PC-9 (cell line): ENCODE measurements at regions of chr17 and their contacts with region 1.

Region 1: GRCh38 chr17:40854159-40854814 is 12.7 kb downstream of the KRT12 start:
- DNase-seq: peak in 1 of 2 experiments; percentile 90
- H3K4me3 ChIP-seq: no peak overlapping the region
- H3K27ac ChIP-seq: peak overlapping the region; percentile 94
- H3K4me1 ChIP-seq: peaks cover 72% of the 10 kb centered on the region
- H3K27me3 ChIP-seq: no peaks in the 10 kb centered on the region
- CTCF ChIP-seq: no peak

Region 2: DNA sequence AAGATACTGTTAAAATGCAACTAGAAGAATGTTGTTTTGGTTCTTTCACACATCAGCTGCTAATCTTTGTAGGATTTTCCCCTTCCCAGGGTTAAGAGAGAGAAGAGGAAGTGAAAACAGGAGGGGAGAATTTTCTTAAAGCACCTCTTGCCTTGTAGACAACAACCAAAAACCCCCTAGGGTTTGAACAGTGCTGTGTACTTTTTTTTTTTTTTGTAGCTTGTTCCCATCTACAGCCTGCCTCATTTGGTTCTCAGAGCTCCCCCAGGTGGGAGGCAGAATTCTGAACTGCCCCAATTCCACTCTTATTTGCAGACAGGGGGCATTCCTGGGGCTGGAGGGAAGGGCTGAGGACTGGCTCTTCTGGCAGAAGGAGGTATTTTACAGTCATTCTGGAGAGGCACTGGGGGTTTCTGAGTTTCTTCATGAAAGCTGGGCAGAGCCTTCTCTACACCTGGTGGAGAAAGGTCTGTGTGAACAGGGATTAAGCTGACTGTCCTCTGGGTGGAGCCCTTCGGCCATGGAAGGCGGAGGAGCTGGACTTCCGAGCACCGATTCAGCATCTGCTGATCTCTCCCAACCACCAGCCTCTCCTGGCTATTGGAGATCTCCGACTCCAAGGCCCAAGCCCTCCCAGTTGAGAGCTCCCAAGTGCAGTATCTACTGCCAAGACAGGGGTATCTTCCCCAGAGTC is 238.8 kb before region 1 on chr17:
- CTCF ChIA-PET with region 1: interaction called, 3 read pairs
- POLR2A ChIA-PET with region 1: interaction called, 8 read pairs
- intact Hi-C with region 1: loop called (anchors 1 kb)
- DNase-seq: peak; percentile 72
- H3K4me3 ChIP-seq: no peak overlapping the region
- H3K27ac ChIP-seq: no peak overlapping the region
- H3K4me1 ChIP-seq: peaks cover 10% of the 10 kb centered on the region
- H3K27me3 ChIP-seq: no peaks in the 10 kb centered on the region
- CTCF ChIP-seq: peak; percentile 73

Region 3: DNA sequence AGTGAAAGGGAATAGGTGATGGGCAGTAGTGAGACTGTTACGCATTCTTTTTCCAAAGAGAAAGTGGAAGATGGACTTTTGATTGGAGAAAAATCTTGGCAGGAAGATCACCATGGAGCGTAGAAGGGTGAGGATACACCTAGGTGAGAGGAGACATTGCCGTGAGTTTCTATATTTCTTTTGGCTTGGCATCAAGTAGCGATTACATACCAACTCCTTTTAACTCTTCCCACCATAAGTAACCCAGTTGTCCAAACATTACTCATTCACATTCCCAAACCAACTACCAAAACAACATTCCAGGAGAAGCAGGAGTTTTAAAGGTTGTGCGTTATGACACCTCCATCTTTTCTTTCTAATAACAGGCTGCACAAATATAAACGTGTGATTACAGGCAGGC is 43.8 kb before region 1 on chr17:
- CTCF ChIA-PET with region 1: interaction called, 3 read pairs
- POLR2A ChIA-PET with region 1: no interaction called
- intact Hi-C with region 1: loop called (anchors 2 kb)
- DNase-seq: peak; percentile 18 to 89
- H3K4me3 ChIP-seq: peak overlapping the region; percentile 11; the same call in 1 of the 2 replicates
- H3K27ac ChIP-seq: peak overlapping the region; percentile 70
- H3K4me1 ChIP-seq: peaks cover 27% of the 10 kb centered on the region
- H3K27me3 ChIP-seq: no peaks in the 10 kb centered on the region
- CTCF ChIP-seq: no peak

Region 4: GRCh38 chr17:41322094-41322902 is 468.0 kb after region 1 on chr17:
- CTCF ChIA-PET with region 1: no interaction called
- POLR2A ChIA-PET with region 1: no interaction called
- intact Hi-C with region 1: loop called (anchors 1 kb)
- DNase-seq: peak in 1 of 2 experiments; percentile 22
- H3K4me3 ChIP-seq: no peak overlapping the region
- H3K27ac ChIP-seq: no peak overlapping the region
- H3K4me1 ChIP-seq: no peaks in the 10 kb centered on the region
- H3K27me3 ChIP-seq: no peaks in the 10 kb centered on the region
- CTCF ChIP-seq: peak; percentile 80

Region 5: GRCh38 chr17:41665566-41666236 is 811.4 kb after region 1 on chr17:
- CTCF ChIA-PET with region 1: interaction called, 3 read pairs
- POLR2A ChIA-PET with region 1: no interaction called
- intact Hi-C with region 1: loop called (anchors 2 kb)
- DNase-seq: peak; percentile 75 to 90
- H3K4me3 ChIP-seq: peak overlapping the region; percentile 46; the same call in 1 of the 2 replicates
- H3K27ac ChIP-seq: peak overlapping the region; percentile 29; the same call in 1 of the 2 replicates
- H3K4me1 ChIP-seq: peaks cover 26% of the 10 kb centered on the region
- H3K27me3 ChIP-seq: no peaks in the 10 kb centered on the region
- CTCF ChIP-seq: peak; percentile 91